Left cardiac atrium (tissue), 4 donors: ENCODE measurements at regions of chr21 and their contacts with region 1.

Region 1: DNA sequence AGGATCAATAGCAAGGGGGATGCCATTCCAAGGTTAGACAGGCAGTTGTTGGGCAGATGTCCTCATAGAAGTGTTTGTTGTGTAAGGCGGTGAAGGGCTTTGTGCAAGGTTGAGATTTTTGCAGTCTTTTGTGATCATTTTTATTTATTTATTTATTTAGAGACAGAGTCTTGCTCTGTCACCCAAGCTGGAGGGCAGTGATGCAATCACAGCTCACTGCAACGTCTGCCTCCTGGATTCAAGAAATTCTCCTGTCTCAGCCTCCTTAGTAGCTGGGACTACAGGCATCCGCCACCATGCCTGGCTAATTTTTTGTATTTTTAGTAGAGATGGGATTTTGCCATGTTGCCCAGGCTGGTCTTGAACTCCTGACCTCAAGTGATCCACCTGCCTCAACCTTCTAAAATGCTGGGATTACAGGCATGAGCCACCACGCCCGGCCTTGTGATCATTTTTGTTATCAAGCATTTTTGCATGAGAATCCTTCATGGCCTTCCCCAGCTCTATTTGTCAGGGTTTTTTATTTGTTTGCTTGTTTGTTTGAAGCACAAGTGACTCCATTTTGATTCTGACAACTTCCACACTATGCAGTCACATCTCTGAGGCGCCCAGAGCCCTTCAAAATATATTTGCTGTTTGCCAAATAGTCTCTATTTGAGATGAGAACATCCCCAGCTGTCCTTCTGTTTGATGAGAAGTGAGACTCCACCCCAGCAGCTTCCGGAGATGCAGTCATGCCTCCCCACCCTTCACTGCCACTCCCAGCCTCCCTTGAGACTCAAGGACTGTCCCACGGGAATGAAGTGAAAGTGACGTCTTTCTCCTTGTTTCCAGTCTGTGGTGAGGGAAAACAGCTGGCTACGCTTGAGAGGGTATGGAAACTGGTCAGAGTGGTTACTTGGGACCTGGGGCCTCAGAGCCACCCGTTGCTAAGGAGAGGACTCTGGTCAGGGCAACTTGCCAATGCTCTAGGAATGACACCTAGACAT is 38.0 kb downstream of the TMEM50B start:
- DNase-seq: peak; percentile 58
- ATAC-seq: peak; percentile 33 to 61

Region 2: DNA sequence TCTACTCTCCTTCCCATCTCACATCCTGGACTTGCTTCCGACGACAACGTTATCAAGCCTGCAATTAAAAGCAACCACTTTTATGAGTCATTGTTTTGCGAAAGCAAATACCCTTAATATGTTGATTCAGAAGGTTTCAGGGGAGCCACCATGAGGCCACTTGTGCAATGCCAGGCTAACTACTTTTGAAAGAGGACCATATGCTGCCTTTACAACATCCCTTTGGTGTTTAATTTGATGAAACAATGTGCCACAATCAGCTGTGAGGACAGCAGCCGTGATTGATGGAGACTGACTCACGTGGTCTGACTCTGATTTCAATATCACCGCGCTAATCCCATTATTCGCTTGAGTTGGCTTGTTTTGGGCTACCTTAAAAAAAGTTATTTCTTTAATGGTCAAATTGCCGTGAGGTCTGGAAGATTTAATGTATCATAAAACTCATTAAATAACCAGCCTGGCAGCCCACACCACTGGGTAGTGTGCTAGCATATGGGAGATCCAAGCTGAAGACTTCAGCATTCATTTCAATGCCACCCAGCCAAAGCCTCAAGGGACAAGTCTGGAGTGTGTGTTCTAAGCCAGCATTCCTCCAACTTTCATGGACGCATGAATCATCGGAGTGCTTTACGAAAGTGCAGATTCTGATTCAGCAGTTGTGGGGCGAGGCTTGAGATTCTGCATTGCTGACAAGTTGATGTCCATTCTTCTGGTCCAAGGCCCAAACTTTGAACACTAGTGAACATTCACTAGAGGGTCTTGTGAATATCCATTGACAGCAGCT is 596.9 kb before region 1 on chr21:
- intact Hi-C with region 1: loop called in 1 of 2 experiments (anchors 10 kb)
- DNase-seq: no peak
- ATAC-seq: peak in 1 of 2 donors; percentile 44

Region 3: DNA sequence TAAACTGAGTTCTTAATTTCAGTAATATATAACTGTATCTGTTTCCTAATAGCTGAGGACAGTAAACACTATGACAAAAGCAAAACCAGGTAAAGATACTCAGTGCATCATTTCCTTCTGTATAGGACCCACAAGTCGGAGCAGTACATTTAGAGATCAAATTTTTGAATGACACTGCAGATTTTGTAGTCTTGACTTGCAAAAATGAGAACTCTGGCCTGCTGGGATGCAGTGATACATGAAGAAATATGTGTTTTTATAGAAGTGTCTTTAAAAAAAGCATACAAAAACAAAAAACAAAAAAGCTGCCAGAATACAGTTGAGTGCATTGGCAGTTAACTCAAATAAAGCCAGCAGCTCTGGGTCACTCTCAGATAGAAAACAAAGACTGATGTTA is 81.2 kb after region 1 on chr21:
- intact Hi-C with region 1: no loop called
- DNase-seq: no peak
- ATAC-seq: no peak

Region 4: GRCh38 chr21:33703750-33704606 is 262.2 kb after region 1 on chr21:
- intact Hi-C with region 1: no loop called
- DNase-seq: no peak
- ATAC-seq: peak; percentile 27 to 65

Region 5: DNA sequence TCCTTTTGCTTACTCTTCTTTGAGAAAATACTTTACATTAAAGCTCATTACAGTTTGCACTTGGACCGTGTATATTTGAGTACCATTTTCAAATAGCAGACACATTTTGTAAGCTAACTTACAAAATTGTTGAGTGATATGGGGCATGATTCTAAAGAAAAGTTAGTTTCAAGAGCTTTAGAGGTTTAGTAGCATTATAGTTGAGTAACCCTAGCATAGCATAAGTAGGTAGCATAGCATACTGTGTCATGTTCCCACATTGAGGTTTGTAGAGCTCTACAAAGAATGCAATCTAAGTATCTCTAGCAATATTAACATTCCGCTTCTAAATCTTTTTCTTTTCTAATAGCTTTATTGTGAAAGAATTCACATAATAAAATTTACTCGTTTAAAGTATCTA is 292.5 kb after region 1 on chr21:
- intact Hi-C with region 1: no loop called
- DNase-seq: no peak
- ATAC-seq: no peak

Region 6: DNA sequence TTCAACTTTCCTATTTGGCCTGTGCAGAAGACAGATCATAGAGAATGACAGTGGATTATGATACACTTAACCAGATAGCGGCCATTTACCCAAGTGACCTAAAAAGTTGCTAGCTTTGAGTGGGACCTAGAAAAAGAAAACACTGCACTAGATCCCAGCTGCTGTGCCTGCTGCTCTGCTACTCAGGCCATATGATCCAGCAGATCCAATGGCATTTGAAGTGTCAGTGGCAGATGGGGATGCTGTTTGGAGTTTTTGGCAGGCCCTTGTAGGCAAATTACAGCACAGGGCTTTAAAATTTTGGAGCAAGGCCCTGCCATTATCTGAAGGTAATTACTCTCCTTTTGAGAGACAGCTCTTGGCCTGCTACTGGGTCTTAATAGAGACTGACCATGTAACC is 848.1 kb after region 1 on chr21:
- intact Hi-C with region 1: no loop called
- DNase-seq: no peak
- ATAC-seq: no peak